ENCODE measurements at regions of chr20 and their contacts with region 1.

Region 1: DNA sequence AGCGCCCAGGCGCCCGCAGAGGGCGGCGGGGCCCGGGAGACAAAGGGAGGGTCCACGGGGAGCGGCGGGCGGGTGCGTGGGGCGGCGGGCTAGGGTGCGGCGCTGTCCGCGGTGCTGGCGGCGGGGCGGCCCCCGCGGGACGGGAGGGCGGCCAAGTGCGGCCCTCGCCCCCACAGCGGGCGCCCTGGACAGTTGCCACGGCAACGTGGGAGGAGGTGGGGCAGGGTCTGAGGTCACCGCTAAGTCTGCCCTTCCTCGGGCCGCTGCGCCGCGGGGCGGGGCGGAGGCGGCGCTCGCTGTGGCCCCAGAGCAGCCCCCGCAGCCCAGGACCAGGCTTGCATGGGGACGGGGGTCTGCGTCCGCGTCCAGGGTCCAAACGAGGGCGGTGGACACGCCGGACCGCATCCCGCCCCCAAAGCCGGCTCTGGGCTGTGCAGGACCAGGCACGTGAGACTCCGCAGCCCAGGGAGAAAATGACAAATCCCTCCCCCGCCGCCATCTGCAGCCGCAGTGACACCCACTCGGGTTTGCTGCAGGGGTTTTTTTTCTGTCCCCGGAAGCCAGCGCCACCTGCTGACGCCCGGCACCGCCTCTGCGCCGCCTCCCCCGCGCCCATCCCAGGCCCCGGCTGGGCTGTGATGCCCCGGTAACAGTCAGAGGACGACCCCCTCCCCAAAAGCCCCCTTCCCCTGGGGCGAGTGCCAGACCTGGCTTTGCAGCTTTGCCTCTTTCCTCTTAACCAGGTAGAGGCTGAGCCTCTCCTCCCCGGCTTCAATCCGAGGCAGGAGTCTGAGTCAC is 36.8 kb downstream of the YTHDF1 start:
- DNase-seq: peak; percentile 69
- H3K4me3 Mint-ChIP-seq: no peak overlapping the region
- H3K27ac Mint-ChIP-seq: no peak overlapping the region
- H3K4me1 Mint-ChIP-seq: peaks cover 14% of the 10 kb centered on the region
- H3K27me3 Mint-ChIP-seq: peaks cover 29% of the 10 kb centered on the region

Region 2: DNA sequence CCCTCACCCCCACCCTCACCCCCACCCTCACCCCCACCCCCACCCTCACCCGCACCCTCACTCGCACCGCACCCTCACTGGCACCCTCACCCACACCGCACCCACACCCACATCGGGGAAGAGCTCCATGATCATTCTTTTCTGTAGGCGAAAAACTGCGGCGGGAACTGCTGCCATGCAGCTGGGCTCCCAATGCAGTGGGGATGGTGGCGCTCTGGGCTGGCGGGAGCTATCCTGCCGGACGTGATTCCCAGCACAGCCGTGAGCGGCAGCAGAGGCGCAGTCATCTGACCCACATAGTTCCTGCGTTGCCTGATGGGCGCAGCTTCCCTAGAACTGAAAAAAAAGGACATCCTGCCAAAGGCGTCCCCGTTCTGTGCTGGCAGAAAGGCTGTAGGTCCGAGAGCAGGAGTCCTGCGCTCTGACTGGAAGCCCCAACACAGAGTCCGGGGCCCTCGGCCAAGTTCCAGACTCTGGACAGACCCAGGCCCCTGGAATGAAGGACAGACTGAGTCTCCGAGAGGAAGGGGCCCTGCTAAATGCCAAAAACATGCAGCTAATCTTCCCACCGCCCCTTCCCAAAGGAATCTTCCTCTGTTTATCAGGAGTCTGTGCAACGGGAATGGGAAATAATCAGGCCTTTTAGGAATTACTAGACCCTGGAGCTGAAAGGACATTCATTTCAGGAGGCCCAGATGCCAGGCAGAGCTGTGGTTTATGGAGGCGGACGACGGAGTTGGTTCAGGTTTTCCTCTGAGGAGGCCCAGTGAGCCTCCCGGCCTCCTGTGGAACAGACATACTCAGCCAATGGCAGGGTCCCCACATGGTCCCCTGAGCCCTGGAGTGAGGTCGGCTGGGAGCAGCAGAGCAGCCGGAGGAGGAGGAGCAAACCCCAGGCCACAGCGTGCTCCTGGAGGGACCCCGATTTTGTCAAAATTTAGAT is 303.4 kb before region 1 on chr20:
- CTCF ChIA-PET with region 1: no interaction called
- intact Hi-C with region 1: no loop called
- DNase-seq: peak; percentile 23
- H3K4me3 Mint-ChIP-seq: no peak overlapping the region
- H3K27ac Mint-ChIP-seq: no peak overlapping the region
- H3K4me1 Mint-ChIP-seq: peaks cover 17% of the 10 kb centered on the region
- H3K27me3 Mint-ChIP-seq: no peaks in the 10 kb centered on the region

Region 3: DNA sequence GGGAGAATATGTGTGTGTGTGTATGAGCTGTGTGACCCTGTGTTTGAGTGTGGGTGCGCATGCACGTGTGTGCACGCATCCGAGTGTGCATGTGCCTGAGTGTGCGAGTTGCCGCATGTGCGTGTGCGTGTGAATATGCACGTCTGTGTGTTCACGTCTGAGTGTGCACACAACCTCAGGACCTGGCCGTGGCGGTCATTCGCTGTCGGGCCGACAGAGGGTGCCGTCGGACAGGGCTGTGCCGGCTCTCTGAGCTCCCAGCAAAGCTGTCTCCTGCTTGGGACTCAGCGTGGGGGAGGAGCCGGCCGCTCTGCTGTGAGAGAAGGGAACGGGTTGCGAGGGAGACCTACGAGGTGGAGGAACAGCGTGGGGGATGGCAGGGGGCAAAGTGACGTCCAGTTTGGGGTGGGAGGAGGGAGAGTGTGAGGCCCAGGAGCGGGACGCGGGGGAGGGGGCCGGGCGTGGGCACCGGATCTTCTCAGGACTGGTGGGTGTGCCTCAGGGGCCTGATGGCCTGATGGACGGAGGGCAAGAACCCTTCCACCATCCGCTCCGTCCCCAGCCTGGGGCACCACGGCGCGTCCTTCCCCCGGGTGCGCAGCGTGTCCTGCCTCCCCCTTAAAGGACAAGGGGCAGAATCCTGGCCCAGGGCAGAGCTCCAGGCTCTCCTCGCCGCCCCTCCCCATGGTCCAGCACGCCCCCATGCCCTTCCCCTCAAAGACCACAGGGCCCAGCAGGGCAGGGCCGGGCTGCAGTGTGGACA is 206.6 kb before region 1 on chr20:
- CTCF ChIA-PET with region 1: no interaction called
- intact Hi-C with region 1: loop called (anchors 2 kb)
- DNase-seq: peak; percentile 91
- H3K4me3 Mint-ChIP-seq: no peak overlapping the region
- H3K27ac Mint-ChIP-seq: no peak overlapping the region
- H3K4me1 Mint-ChIP-seq: peaks cover 12% of the 10 kb centered on the region
- H3K27me3 Mint-ChIP-seq: peaks cover 29% of the 10 kb centered on the region

Region 4: DNA sequence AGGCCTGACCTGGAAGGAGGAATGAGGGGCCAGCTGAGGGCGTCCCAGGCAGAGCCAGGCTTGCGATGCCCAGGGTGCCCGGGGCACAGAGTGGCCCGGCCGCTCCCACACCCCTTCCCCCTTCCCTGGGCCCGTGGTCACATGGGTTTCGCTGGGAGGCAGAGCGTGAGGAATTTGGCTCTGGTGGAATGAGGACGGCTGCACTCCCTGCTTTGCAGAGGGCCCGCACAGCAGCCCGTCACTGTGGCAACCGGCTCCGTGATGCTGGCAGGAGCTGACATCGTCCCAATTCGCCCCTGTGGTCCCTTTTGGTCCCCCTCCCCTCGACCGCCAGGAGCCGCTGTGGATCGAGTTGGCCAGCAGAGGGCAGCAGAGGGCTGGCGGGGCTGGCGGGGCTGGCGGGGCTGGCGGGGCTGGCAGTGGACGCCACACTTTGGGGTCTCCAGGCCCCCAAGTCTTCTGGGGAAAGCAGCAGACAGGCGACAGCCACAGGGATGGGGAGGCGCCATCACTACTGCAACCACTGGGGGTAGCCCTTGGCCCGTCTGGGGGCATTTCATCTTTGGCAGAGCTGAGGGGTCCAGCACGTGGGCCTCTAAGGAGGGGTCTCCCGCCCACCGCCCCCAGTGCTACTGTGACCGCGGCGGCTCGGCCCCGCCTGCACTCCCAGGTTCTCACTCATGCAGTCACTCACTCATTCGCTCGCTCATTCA is 122.7 kb before region 1 on chr20:
- CTCF ChIA-PET with region 1: interaction called, 7 read pairs
- intact Hi-C with region 1: loop called (anchors 1 kb)
- DNase-seq: peak; percentile 61
- H3K4me3 Mint-ChIP-seq: no peak overlapping the region
- H3K27ac Mint-ChIP-seq: no peak overlapping the region
- H3K4me1 Mint-ChIP-seq: no peaks in the 10 kb centered on the region
- H3K27me3 Mint-ChIP-seq: peaks cover 8% of the 10 kb centered on the region

Region 5: DNA sequence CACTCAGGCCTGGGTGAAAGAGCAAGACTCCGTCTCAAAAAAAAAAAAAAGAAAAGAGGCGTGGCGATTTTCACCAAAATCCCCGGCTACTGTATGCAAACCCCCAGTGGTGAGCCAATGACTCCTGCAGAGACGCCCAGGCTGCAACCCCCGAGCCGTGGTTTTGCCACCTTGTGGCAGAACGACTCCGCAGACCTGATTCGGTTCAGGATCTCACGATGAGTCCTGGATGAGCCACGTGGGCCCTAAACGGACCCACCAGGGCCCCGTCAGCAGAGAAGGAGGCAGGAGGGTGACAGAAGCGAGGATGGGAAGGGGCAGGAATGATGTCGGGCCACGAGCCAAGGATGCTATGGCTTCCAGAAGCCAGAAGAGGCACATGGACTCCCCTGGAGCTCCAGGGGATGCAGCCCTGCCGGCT is 603.0 kb after region 1 on chr20:
- CTCF ChIA-PET with region 1: no interaction called
- intact Hi-C with region 1: no loop called
- DNase-seq: peak; percentile 65
- H3K4me3 Mint-ChIP-seq: no peak overlapping the region
- H3K27ac Mint-ChIP-seq: no peak overlapping the region
- H3K4me1 Mint-ChIP-seq: peaks cover 11% of the 10 kb centered on the region
- H3K27me3 Mint-ChIP-seq: no peaks in the 10 kb centered on the region